ENCODE measurements at regions of chr12 and their contacts with region 1.

Region 1: DNA sequence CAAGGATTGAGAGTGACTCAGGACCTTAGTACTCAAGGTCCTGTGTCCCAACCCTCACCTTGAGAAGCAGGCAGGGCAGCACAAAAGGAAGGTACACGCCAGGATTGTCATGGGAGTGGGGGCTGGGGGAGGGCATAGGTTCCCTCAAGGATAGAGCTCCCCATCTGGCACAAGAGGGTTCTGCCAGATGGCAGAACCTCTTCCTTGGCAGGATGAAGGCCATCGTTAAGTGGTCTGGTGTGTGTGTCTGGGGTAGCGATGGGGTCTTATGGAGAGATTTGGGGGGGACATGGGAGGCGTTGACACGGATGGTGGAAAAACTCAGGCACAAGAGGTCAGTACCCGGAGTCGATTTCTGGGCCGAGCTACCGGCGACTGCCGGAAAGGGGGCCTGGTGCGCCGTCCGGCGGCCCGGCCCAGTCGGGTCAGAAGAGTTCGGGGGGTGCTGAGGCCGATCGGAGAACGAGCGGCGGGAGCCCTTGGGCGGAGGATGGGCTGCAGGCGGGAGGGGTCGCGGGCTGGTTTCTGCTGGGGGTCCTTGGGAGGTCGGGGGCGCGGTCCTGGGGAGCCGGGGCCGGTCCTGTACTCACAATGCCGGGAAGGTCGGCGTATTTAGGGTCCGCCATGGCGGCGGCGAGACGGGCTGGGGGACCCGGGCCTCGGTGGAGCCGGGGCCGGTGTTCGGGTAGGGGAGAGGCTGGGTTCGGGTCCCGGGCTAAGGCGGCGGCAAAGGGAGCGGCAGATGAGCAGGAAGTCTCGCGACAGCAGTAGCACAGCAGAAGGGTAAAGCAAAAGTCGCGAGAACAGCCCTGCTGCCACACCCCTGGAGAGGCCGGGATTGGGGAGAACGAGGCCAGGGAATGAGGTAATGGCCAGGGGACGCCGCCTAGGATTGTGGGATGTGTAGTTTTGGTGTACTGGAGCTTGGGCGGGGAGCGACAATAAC is at the start of gene DCTN2:
- DNase-seq: peak; percentile 80
- H3K4me3 ChIP-seq: peak within 1 kb of the TSS; percentile 89
- CTCF ChIP-seq: no peak

Region 2: DNA sequence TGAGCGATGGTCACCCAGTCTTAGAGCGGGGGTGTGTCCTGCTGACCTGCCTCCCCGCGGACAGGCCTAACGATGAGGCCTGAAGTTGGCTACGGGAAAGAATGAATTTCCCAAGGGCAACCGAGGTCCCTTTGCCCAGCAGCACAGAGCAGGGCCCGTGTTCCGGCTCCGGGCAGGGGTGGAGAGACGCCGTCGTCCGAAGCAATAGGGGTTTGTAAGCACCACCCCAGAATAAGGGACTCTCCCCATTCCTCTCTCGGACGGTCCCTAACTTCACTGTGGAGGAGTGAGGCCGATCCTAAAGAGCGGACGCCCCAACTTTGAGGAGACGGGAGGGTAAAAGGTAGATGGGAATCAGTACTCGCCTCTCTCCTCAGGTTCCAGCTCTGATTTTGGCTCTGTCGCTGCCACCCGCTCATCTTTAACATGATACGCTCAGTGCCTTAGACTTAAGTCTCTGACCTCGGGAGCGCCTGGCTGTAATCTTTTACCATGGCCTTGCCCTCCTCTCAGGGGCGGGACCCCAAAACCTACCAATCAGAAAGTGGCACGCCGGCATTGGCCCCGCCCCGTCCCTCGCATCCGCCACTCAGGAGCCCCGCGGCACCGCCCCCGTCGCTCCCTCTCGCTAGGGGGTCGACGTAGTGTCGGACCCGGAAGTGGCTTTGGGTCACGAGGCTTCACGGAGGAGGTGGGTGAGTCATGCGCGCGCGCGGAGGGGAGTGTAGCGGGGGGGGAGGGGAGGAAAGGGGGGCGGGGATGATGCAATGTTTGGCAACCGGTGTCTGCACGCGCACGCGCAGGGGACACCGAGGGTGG is 26.4 kb before region 1 on chr12 and contains the start of gene DDIT3:
- CTCF ChIA-PET with region 1: interaction called, 7 read pairs
- POLR2A ChIA-PET with region 1: interaction called, 12 read pairs
- DNase-seq: peak; percentile 85
- H3K4me3 ChIP-seq: peak within 1 kb of the TSS; percentile 100
- CTCF ChIP-seq: no peak